ENCODE measurements at regions of chr7 and their contacts with region 1.

Region 1: DNA sequence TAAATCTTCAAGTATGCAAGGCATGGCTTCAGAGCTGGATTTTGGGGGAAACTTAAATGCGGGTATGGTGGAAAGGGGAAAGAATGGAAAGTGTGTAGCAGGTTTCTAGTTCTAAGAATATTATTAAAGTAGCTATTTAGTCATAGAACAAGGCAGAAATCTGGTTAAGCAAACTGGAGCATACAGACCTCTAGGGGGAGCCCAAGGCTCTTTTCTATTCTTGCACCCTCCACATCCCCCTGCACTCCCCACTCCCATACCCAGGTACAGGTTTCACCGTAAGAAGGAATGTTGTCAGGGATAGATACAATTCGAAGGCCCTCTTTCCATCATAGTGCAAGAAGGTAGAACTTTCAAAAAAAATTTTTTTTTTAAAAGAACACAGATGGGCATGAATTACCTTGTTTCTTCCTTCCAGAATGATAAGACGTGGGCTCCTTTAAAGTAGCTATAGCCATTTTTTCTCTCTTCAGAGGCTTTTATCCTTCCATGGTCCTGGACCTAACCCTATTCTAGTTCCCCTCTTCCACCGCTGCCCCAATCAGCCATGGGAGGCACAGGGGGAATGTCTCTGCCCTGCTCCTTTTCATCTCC is 41.5 kb upstream of the SMIM30 start:
- DNase-seq: peak; percentile 35
- CTCF ChIP-seq: peak; percentile 37

Region 2: DNA sequence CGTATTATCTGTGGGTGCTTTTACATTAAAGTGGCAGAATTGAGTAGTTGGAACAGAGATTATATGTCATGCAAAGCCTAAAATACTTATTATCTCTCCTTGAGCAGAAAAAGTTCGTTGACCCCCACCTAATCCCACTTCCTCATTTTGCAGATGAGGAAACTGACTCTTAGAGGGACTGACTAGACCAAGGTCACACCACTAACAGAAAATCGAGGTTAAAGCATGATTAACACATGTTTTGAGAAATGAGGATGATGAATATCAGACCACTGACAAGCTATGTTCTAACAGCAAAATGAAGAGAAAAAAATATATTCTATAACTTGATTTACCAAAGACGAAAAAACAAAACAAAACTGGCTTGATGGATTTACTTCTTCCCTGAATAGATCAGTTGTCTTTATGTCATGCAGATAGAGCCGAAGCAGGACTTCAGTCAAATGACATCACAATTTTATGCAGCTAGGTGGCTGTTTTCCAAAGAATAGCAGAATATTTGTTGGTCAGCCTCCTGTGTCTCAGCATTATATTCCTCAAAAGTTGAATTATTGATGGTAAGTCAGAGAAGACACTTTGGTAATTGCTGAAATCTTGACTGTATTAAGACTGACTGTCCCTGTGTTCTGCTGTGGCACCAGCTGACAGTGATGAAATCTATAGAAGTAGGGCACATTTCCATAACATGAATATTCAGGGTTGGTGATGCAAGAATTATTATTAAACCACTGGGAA is 17.3 kb before region 1 on chr7:
- CTCF ChIA-PET with region 1: interaction called, 43 read pairs
- POLR2A ChIA-PET with region 1: no interaction called
- DNase-seq: no peak
- CTCF ChIP-seq: no peak

Region 3: GRCh38 chr7:113172726-113173125 is 12.9 kb after region 1 on chr7:
- CTCF ChIA-PET with region 1: interaction called, 21 read pairs
- POLR2A ChIA-PET with region 1: no interaction called
- DNase-seq: no peak
- CTCF ChIP-seq: no peak

Region 4: GRCh38 chr7:113810080-113810744 is 650.4 kb after region 1 on chr7:
- CTCF ChIA-PET with region 1: no interaction called
- POLR2A ChIA-PET with region 1: no interaction called
- DNase-seq: no peak
- CTCF ChIP-seq: no peak

Measured in GM10248 (cell line).